ENCODE measurements at regions of chr9 and their contacts with region 1.

Region 1: DNA sequence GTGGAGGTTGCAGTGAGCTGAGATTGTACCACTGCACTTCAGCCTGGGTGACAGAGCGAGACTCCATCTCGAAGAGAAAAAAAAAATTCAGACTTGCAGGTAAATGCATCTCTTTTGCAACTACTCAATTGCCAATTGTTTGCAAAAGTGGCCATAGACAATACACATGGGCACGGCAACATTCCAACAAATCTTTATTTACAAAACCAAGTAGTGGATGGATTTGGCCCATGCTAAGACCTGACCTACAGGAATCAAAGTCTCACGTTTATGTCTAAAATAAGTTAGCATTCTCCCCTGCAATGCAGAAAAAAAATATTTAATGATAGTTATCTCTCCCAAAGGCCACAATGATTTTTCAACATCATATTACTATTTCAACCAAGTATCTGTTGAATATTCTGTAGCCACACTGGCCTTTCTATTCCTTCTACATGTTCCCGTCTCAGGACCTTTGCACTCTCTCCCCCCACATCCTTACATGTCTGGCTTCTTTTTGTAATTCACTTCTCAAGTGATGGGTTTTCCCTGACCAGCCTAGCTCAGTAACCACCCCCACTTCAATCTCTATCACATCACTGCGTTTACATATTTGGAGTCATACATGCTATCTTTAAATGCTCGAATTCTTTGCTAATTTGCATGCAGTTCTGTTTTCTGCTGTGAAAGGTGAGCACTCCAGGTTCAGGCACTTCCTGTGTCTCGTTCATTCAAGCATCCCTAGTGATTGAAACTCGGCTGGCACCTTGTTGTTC is 54.2 kb downstream of the FNBP1 start:
- DNase-seq: peak; percentile 61
- H3K4me3 Mint-ChIP-seq: peak overlapping the region; percentile 7
- H3K27ac Mint-ChIP-seq: peak overlapping the region; percentile 83
- H3K4me1 Mint-ChIP-seq: peaks cover 85% of the 10 kb centered on the region
- H3K27me3 Mint-ChIP-seq: no peaks in the 10 kb centered on the region

Region 2: GRCh38 chr9:129610473-129611301 is 378.1 kb before region 1 on chr9:
- CTCF ChIA-PET with region 1: no interaction called
- intact Hi-C with region 1: no loop called
- DNase-seq: peak; percentile 83
- H3K4me3 Mint-ChIP-seq: peak overlapping the region; percentile 71
- H3K27ac Mint-ChIP-seq: no peak overlapping the region
- H3K4me1 Mint-ChIP-seq: peaks cover 25% of the 10 kb centered on the region
- H3K27me3 Mint-ChIP-seq: no peaks in the 10 kb centered on the region

Region 3: GRCh38 chr9:129944506-129945116 is 44.2 kb before region 1 on chr9:
- CTCF ChIA-PET with region 1: no interaction called
- intact Hi-C with region 1: loop called (anchors 1 kb)
- DNase-seq: peak; percentile 81
- H3K4me3 Mint-ChIP-seq: no peak overlapping the region
- H3K27ac Mint-ChIP-seq: peak overlapping the region; percentile 82
- H3K4me1 Mint-ChIP-seq: peaks cover 48% of the 10 kb centered on the region
- H3K27me3 Mint-ChIP-seq: no peaks in the 10 kb centered on the region

Region 4: GRCh38 chr9:130010151-130010988 is 21.6 kb after region 1 on chr9:
- CTCF ChIA-PET with region 1: interaction called, 3 read pairs
- intact Hi-C with region 1: loop called (anchors 1 kb)
- DNase-seq: peak; percentile 76
- H3K4me3 Mint-ChIP-seq: peak overlapping the region; percentile 42
- H3K27ac Mint-ChIP-seq: peak overlapping the region; percentile 93
- H3K4me1 Mint-ChIP-seq: peaks cover 81% of the 10 kb centered on the region
- H3K27me3 Mint-ChIP-seq: no peaks in the 10 kb centered on the region

Region 5: DNA sequence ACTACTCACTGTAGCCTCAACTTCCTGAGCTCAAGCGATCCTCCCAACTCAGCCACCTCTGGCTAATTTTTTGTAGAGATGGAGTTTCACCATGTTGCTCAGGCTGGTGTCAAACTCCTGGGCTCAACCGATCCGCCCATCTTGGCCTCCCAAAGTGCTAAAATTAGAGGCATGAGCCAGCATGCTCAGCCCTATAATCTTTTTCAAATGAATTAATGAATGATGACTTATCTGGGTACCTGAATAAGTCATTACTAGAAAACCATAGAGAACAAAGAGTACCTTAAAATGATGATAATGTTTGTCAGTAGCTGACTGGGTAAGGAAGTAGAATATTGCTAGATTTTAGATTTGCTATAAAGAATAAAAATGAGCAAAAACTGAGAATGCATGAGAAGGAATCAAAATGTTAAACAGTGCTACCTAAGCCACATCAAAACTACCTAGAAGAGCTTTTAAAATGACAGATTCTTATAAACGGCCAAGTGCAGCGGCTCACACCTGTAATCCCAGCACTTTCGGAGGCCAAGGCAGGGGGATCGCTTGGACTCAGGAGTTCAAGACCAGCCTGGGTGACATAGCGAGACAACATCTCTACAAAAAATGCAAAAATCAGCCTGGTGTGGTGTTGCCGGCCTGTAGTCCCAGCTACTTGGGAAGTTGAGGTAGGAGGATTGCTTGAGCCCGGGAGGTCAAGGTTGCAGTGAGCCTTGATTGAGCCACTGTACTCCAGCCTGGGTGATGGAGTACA is 40.6 kb after region 1 on chr9:
- CTCF ChIA-PET with region 1: interaction called, 7 read pairs
- intact Hi-C with region 1: loop called (anchors 1 kb)
- DNase-seq: peak; percentile 68
- H3K4me3 Mint-ChIP-seq: peak overlapping the region; percentile 45
- H3K27ac Mint-ChIP-seq: peak overlapping the region; percentile 85
- H3K4me1 Mint-ChIP-seq: peaks cover 96% of the 10 kb centered on the region
- H3K27me3 Mint-ChIP-seq: no peaks in the 10 kb centered on the region

Measured in activated naive CD4-positive, alpha-beta T cell treated with anti-CD3 and anti-CD28 coated beads for 36 hours (primary cell).